WTC11 (cell line): ENCODE measurements at regions of chr1 and their contacts with region 1.

Region 1: DNA sequence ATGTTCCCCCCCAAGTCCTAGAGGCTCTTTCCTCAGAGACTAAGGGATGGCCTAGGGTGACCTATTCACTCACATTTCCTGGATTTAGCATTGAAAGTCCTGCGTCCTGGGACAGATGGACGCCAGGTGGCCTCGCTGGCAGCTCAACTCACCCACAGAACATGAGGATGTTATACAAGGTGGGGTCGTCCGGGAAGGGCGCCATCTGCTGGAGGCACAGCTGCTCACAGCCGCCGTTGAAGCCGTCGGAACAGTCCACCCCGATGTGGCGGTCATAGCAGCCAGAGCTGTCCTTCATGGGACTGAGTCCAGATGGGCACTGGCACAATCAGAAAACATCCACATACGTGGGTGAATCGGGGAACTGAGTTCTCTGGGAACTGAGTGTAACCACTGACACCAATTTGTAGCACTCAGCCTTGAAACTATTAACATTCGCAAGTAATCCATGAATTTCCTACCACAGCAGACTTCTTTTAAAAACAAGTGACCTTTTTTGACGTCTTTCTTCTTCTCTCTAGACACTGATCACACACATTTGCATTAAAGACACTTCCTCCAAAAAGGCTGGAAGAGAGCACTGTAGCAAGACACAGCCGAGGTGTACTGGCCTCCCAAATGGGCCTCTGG is 215.4 kb downstream of the ASTN1 start:
- DNase-seq: peak; percentile 92
- ATAC-seq: peak; percentile 89
- H3K4me3 Mint-ChIP-seq: no peak overlapping the region
- H3K27ac Mint-ChIP-seq: no peak overlapping the region
- H3K4me1 Mint-ChIP-seq: peaks cover 49% of the 10 kb centered on the region
- H3K27me3 Mint-ChIP-seq: no peaks in the 10 kb centered on the region; the same call in 1 of the 2 replicates
- CTCF ChIP-seq: peak; percentile 92

Region 2: GRCh38 chr1:176926330-176927086 is 22.6 kb before region 1 on chr1:
- CTCF ChIA-PET with region 1: interaction called, 10 read pairs
- POLR2A ChIA-PET with region 1: interaction called, 3 read pairs
- DNase-seq: no peak
- ATAC-seq: no peak
- H3K4me3 Mint-ChIP-seq: no peak overlapping the region
- H3K27ac Mint-ChIP-seq: no peak overlapping the region
- H3K4me1 Mint-ChIP-seq: peaks cover 6% of the 10 kb centered on the region
- H3K27me3 Mint-ChIP-seq: no peaks in the 10 kb centered on the region; the same call in 1 of the 2 replicates
- CTCF ChIP-seq: no peak

Region 3: DNA sequence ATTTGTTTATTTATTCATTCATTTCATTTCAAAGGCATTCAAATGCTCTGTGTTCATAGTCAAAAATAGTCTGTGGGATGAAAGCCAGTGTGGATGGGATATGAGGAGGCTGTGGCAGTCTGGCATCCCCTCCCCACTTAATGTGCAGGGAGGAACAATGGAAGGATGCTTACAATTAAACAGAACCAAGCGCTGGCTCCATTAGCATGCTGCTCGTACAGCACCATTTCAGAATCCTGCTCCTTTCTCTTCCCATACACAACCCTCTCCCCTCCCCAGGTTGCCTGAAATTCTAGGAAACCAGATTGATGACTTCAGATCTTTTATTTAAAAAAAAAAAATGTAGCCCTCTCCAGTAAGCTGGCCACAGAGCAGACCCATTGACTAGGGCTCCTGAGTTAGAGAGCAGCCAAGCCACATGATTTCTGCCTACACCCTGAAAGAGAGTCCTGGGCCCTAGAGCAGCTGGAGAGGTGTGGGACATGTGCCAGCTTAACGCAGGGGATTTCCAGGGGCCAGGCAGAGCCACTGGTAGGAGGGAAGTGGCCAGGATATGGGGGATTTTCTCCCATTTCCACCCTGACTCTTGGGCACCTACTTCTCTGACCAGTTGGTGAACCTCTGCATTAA is 10.2 kb after region 1 on chr1:
- CTCF ChIA-PET with region 1: interaction called, 13 read pairs
- POLR2A ChIA-PET with region 1: no interaction called
- DNase-seq: no peak
- ATAC-seq: peak; percentile 48
- H3K4me3 Mint-ChIP-seq: no peak overlapping the region
- H3K27ac Mint-ChIP-seq: no peak overlapping the region
- H3K4me1 Mint-ChIP-seq: peaks cover 24% of the 10 kb centered on the region
- H3K27me3 Mint-ChIP-seq: no peaks in the 10 kb centered on the region
- CTCF ChIP-seq: no peak

Region 4: GRCh38 chr1:177044390-177044789 is 95.2 kb after region 1 on chr1:
- CTCF ChIA-PET with region 1: interaction called, 12 read pairs
- POLR2A ChIA-PET with region 1: no interaction called
- DNase-seq: peak; percentile 43
- ATAC-seq: peak; percentile 88
- H3K4me3 Mint-ChIP-seq: peak overlapping the region; percentile 33; the same call in 1 of the 2 replicates
- H3K27ac Mint-ChIP-seq: peak overlapping the region; percentile 75; the same call in 1 of the 2 replicates
- H3K4me1 Mint-ChIP-seq: peaks cover 31% of the 10 kb centered on the region
- H3K27me3 Mint-ChIP-seq: peaks cover 13% of the 10 kb centered on the region
- CTCF ChIP-seq: no peak

Region 5: GRCh38 chr1:177164380-177165068 is 215.4 kb after region 1 on chr1 and contains the start of gene ASTN1:
- CTCF ChIA-PET with region 1: interaction called, 14 read pairs
- POLR2A ChIA-PET with region 1: no interaction called
- DNase-seq: peak; percentile 69
- ATAC-seq: peak; percentile 89
- H3K4me3 Mint-ChIP-seq: peak within 1 kb of the TSS; percentile 90
- H3K27ac Mint-ChIP-seq: no peak within 1 kb of the TSS
- H3K4me1 Mint-ChIP-seq: peaks cover 9% of the 10 kb centered on the region
- H3K27me3 Mint-ChIP-seq: peaks cover 26% of the 10 kb centered on the region; the same call in 1 of the 2 replicates
- CTCF ChIP-seq: no peak
- total RNA-seq, gene ASTN1: 3.4 to 5.0 TPM (median 4.7 TPM) in 3 replicates

Region 6: DNA sequence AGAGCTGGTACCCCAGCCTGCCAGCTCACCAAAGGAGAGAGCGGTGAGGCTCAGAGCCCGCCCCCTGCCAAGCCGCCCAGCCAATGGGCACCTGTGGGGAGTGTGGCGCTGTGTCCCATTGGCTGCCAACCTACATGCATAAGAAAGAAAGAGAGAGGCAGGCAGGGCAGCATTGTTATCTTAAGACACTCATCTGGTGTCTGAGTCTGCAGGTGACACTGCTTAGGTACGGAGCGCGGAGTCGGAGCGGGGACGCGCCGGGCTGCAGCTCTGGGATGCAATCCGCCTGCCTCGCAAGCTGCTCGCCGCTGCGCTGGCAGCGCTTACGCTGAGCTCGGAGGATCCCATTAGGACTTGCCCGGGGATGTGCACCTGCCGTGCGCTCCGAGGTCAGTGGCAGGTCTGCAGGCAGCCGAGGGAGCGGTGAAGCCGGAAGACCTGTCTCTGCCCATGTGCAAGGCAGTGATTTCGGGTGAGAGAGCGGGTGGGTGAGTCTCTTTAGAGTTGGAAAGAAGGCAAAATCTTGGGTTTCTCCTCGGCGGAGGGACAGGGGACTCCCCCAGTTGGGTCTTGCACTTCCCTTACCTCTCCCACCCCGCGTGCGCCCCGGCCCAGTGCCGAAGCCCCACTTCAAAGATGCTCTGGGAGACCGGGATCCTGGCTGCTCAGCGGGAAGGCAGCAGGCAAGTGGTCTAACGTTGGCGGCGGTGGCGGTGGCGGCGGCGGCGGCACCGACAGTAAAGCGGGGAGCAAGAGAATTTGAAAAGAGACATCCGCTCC is 221.8 kb after region 1 on chr1 and contains the start of gene BRINP2:
- CTCF ChIA-PET with region 1: interaction called, 19 read pairs
- POLR2A ChIA-PET with region 1: no interaction called
- DNase-seq: peak; percentile 87
- ATAC-seq: peak; percentile 100
- H3K4me3 Mint-ChIP-seq: no peak within 1 kb of the TSS
- H3K27ac Mint-ChIP-seq: no peak within 1 kb of the TSS
- H3K4me1 Mint-ChIP-seq: peaks cover 11% of the 10 kb centered on the region
- H3K27me3 Mint-ChIP-seq: peaks cover 6% of the 10 kb centered on the region
- CTCF ChIP-seq: no peak
- total RNA-seq, gene BRINP2: 0.24 to 0.41 TPM (median 0.34 TPM) in 3 replicates

Region 7: GRCh38 chr1:177181631-177182291 is 232.6 kb after region 1 on chr1:
- CTCF ChIA-PET with region 1: interaction called, 37 read pairs
- POLR2A ChIA-PET with region 1: no interaction called
- DNase-seq: peak; percentile 92
- ATAC-seq: peak; percentile 92
- H3K4me3 Mint-ChIP-seq: peak overlapping the region; percentile 74
- H3K27ac Mint-ChIP-seq: no peak overlapping the region
- H3K4me1 Mint-ChIP-seq: peaks cover 12% of the 10 kb centered on the region
- H3K27me3 Mint-ChIP-seq: peaks cover 48% of the 10 kb centered on the region
- CTCF ChIP-seq: peak; percentile 89